AG04450 (cell line): ENCODE measurements at regions of chr9 and their contacts with region 1.

Region 1: GRCh38 chr9:36728651-36729520 is 156.2 kb downstream of the MELK start:
- DNase-seq: peak; percentile 66
- H3K4me3 ChIP-seq: no peak overlapping the region
- H3K27ac ChIP-seq: no peak overlapping the region
- H3K27me3 ChIP-seq: no peaks in the 10 kb centered on the region
- CTCF ChIP-seq: peak; percentile 84

Region 2: DNA sequence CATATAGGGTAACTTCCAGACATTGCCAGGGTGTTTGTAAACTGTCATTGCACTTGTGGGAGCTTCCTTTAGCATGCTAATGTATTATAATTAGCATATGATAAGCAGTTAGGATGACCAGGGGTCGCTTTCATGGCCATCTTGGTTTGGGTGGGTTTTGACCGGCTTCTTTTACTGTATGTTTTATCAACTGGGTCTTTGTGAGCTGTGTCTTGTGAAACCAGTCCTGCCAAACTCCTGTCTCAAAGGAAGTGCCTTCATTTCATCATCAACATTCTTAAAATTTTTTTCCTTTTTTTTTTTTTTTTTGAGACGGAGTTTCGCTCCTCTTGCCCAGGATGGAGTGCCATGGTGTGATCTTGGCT is 168.0 kb before region 1 on chr9:
- CTCF ChIA-PET with region 1: interaction called, 14 read pairs
- POLR2A ChIA-PET with region 1: no interaction called
- DNase-seq: no peak
- H3K4me3 ChIP-seq: no peak overlapping the region
- H3K27ac ChIP-seq: no peak overlapping the region
- H3K27me3 ChIP-seq: no peaks in the 10 kb centered on the region
- CTCF ChIP-seq: no peak

Region 3: GRCh38 chr9:36717276-36717675 is 11.6 kb before region 1 on chr9:
- CTCF ChIA-PET with region 1: interaction called, 12 read pairs
- POLR2A ChIA-PET with region 1: no interaction called
- DNase-seq: no peak
- H3K4me3 ChIP-seq: no peak overlapping the region
- H3K27ac ChIP-seq: peak overlapping the region; percentile 2
- H3K27me3 ChIP-seq: peaks cover 11% of the 10 kb centered on the region
- CTCF ChIP-seq: no peak

Region 4: GRCh38 chr9:37283730-37284325 is 554.9 kb after region 1 on chr9:
- CTCF ChIA-PET with region 1: no interaction called
- POLR2A ChIA-PET with region 1: no interaction called
- DNase-seq: no peak
- H3K4me3 ChIP-seq: no peak overlapping the region
- H3K27ac ChIP-seq: peak overlapping the region; percentile 76
- H3K27me3 ChIP-seq: no peaks in the 10 kb centered on the region
- CTCF ChIP-seq: no peak